ENCODE measurements at regions of chr4 and their contacts with region 1.

Region 1: DNA sequence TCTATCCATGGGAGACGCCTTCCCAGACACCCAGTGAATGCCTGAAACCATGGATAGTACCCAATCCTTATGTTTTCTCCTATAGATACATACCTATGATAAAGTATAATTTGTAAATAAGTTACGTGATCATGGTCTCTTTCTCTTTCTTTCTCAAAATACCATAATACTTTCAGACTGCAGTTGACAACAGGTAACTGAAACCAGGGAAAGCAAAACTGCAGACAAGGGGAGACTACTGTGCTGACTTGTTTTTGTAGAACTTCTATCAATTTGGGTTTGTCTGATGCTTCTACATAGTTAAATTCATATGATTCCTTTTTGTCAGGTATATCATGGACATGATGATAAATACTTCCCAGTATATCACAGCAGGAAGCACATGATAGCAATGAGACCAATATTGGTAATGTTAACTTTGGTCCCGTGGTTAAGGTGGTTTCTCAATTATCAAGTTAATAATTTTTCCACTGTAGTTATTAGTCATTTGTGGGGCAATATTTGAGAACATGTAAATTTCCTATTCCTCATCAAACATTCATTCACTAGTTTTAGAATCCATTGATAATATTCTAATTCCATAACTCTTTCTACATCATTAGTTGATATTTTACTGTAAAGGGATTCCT is 298.0 kb upstream of the TET2 start:
- DNase-seq: no peak
- CTCF ChIP-seq: no peak

Region 2: GRCh38 chr4:104860238-104861123 is 11.8 kb after region 1 on chr4:
- CTCF ChIA-PET with region 1: interaction called, 24 read pairs
- POLR2A ChIA-PET with region 1: no interaction called
- DNase-seq: peak; percentile 54
- CTCF ChIP-seq: peak; percentile 75